Gastrocnemius medialis (tissue), 4 donors: ENCODE measurements at regions of chr4 and their contacts with region 1.

Region 1: GRCh38 chr4:88523325-88524129 is at the start of gene PYURF:
- DNase-seq: peak; percentile 91 to 93
- ATAC-seq: peak; percentile 89 to 96
- H3K4me3 ChIP-seq: peak within 1 kb of the TSS; percentile 86 to 96 (median 90)
- H3K27ac ChIP-seq: peak within 1 kb of the TSS; percentile 88 to 98 (median 92)
- H3K4me1 ChIP-seq: peaks cover 26 to 35% of the 10 kb centered on the region in 2 donors
- H3K27me3 ChIP-seq: no peaks in the 10 kb centered on the region
- CTCF ChIP-seq: no peak
- POLR2A ChIP-seq: peak; percentile 87
- total RNA-seq, gene PYURF: 62.4 to 86.0 (median 72.3) TPM

Region 2: DNA sequence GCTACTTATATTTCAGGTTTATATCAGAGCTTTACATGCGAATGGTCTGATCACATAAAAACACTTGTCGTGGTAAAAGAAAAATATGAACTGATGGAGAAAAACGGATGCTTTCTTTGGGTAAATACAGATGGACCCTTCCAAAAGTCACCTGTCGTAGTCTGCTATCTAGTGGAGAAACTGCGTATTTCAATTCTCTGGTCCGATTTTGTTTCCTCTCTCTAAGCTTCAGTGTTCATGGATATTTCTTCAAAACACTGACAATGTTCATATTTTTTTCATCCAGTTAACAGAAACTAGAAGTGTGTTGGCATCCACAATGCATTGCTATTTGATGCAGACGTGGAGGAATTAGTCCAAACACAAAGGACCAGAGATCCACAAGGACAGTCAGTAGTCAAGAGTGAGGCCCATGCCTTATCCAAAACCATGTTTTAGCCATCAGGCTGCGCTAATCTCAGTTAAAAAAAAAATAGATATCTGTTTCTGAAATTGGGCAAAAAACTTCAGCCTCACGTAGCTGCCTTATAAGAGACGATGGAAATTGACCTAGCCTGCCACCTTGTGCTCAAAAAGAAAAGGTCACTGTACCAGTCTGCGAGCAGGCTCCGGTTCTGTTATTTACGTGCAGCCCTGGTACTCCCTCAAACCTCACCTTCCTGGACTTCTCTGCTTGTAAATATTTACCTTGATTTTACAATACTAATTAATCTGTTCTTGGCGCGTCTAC is 674.7 kb before region 1 on chr4:
- in situ Hi-C with region 1: loop called in 1 of 4 experiments (anchors 25 kb)
- intact Hi-C with region 1: no loop called
- DNase-seq: peak in 1 of 2 donors; percentile 18
- ATAC-seq: peak; percentile 75 to 80
- H3K4me3 ChIP-seq: peak overlapping the region in 3 of 4 donors; percentile 4 to 30 (median 28)
- H3K27ac ChIP-seq: peak overlapping the region in 3 of 4 donors; percentile 15 to 36 (median 34)
- H3K4me1 ChIP-seq: peaks cover 7 to 8% of the 10 kb centered on the region in 2 donors
- H3K27me3 ChIP-seq: no peaks in the 10 kb centered on the region
- CTCF ChIP-seq: peak; percentile 23 to 62 (median 48)
- POLR2A ChIP-seq: no peak

Region 3: GRCh38 chr4:88284439-88285234 is 238.9 kb before region 1 on chr4 and contains the start of gene PPM1K:
- in situ Hi-C with region 1: no loop called
- intact Hi-C with region 1: loop called (anchors 2 kb)
- DNase-seq: peak; percentile 98 to 99
- ATAC-seq: peak; percentile 92 to 93
- H3K4me3 ChIP-seq: peak within 1 kb of the TSS; percentile 81 to 98 (median 90)
- H3K27ac ChIP-seq: peak within 1 kb of the TSS; percentile 93 to 99 (median 98)
- H3K4me1 ChIP-seq: peaks cover 25 to 41% of the 10 kb centered on the region in 2 donors
- H3K27me3 ChIP-seq: no peaks in the 10 kb centered on the region
- CTCF ChIP-seq: peak in 1 of 5 experiments; percentile 21
- POLR2A ChIP-seq: peak; percentile 74 to 93
- total RNA-seq, gene PPM1K: 3.3 to 9.5 (median 6.9) TPM

Region 4: DNA sequence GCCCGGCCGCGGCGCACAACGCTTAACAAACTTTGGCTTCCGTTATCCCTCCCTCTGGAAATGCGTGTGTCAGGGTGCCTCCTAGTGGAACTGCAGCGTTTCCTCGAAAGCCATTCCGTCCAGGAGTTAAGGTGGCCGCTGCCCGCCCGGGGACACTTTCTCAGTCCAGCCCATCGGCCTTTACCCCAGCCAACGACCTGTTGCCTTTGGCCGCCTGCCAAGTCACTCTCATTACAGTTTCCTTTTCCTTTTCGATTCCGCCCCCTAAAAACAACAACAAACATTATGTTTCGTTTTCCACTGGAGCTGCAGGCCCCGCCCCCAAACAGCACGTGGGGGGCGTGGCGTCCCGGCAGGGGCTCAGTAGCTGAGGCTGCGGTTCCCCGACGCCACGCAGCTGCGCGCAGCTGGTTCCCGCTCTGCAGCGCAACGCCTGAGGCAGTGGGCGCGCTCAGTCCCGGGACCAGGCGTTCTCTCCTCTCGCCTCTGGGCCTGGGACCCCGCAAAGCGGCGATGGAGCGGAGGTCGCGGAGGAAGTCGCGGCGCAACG is 66.7 kb before region 1 on chr4 and contains the start of gene HERC5:
- in situ Hi-C with region 1: no loop called
- intact Hi-C with region 1: loop called (anchors 5 kb)
- DNase-seq: peak; percentile 61 to 82
- ATAC-seq: peak; percentile 88 to 95
- H3K4me3 ChIP-seq: peak within 1 kb of the TSS; percentile 67 to 98 (median 71)
- H3K27ac ChIP-seq: peak within 1 kb of the TSS; percentile 53 to 77 (median 63)
- H3K4me1 ChIP-seq: no peaks in the 10 kb centered on the region
- H3K27me3 ChIP-seq: no peaks in the 10 kb centered on the region
- CTCF ChIP-seq: peak; percentile 45 to 68 (median 62)
- POLR2A ChIP-seq: peak; percentile 34 to 60
- total RNA-seq, gene HERC5: 0.55 to 1.5 (median 1.1) TPM

Region 5: GRCh38 chr4:88477229-88477860 is 46.2 kb before region 1 on chr4:
- in situ Hi-C with region 1: no loop called
- intact Hi-C with region 1: no loop called
- DNase-seq: no peak
- ATAC-seq: no peak
- H3K4me3 ChIP-seq: no peak overlapping the region
- H3K27ac ChIP-seq: no peak overlapping the region
- H3K4me1 ChIP-seq: no peaks in the 10 kb centered on the region
- H3K27me3 ChIP-seq: no peaks in the 10 kb centered on the region
- CTCF ChIP-seq: no peak
- POLR2A ChIP-seq: no peak

Region 6: GRCh38 chr4:88823058-88823919 is 299.8 kb after region 1 on chr4:
- in situ Hi-C with region 1: no loop called
- intact Hi-C with region 1: loop called (anchors 10 kb)
- DNase-seq: peak; percentile 85 to 86
- ATAC-seq: peak; percentile 90 to 94
- H3K4me3 ChIP-seq: peak overlapping the region; percentile 45 to 65 (median 58)
- H3K27ac ChIP-seq: peak overlapping the region; percentile 81 to 85 (median 84)
- H3K4me1 ChIP-seq: peaks cover 34 to 44% of the 10 kb centered on the region in 2 donors
- H3K27me3 ChIP-seq: no peaks in the 10 kb centered on the region
- CTCF ChIP-seq: no peak
- POLR2A ChIP-seq: peak; percentile 49 to 82

Region 7: GRCh38 chr4:89110986-89111832 is 587.7 kb after region 1 on chr4 and contains the start of gene TIGD2:
- in situ Hi-C with region 1: no loop called
- intact Hi-C with region 1: loop called (anchors 2 kb)
- DNase-seq: peak; percentile 78 to 83
- ATAC-seq: peak; percentile 87 to 91
- H3K4me3 ChIP-seq: peak within 1 kb of the TSS; percentile 71 to 95 (median 88)
- H3K27ac ChIP-seq: peak within 1 kb of the TSS; percentile 87 to 94 (median 92)
- H3K4me1 ChIP-seq: peaks cover 9 to 13% of the 10 kb centered on the region in 2 donors
- H3K27me3 ChIP-seq: no peaks in the 10 kb centered on the region
- CTCF ChIP-seq: peak; percentile 82 to 88 (median 87)
- POLR2A ChIP-seq: peak; percentile 75 to 76
- total RNA-seq, gene TIGD2: 1.7 to 2.8 (median 2.4) TPM